Activated T-helper 1 cell treated with anti-CD3 and anti-CD28 coated beads, Interleukin-12 subunit alpha, Interleukin-12 subunit beta, Interleukin-2, Interleukin-4 antibody, amounts not matched to agents 30 ng/mL and 10 ng/mL and 1 ng/mL, durations not matched to agents 14 hours and 24 hours and 36 hours (primary cell): ENCODE measurements at regions of chr2 and their contacts with region 1.

Region 1: DNA sequence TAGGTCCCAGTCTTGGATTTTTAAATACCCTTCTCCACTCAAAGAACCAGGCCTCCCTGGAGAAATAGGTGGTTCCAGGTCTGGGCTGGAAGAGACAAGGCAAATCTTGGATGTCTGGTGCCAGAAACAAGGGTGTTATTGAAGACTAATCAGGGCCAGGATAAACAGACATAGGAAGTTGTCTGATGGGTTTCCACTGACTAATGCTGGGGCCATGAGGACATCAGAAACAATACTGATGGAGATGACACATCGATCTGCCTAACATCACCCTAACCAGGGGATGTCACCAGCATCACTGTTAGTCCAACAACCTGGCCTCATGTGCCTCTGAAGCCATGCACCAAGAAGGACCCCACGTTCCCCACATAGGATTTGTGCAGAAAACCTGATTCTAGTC is 42.5 kb upstream of the GLI2 start:
- DNase-seq: no peak
- H3K4me3 Mint-ChIP-seq: no peak overlapping the region
- H3K27ac Mint-ChIP-seq: no peak overlapping the region
- H3K4me1 Mint-ChIP-seq: no peaks in the 10 kb centered on the region
- H3K27me3 Mint-ChIP-seq: peaks cover 22% of the 10 kb centered on the region

Region 2: GRCh38 chr2:121080013-121080772 is 387.1 kb after region 1 on chr2:
- intact Hi-C with region 1: loop called (anchors 1 kb)
- DNase-seq: peak; percentile 11
- H3K4me3 Mint-ChIP-seq: no peak overlapping the region
- H3K27ac Mint-ChIP-seq: no peak overlapping the region
- H3K4me1 Mint-ChIP-seq: no peaks in the 10 kb centered on the region
- H3K27me3 Mint-ChIP-seq: peaks cover 18% of the 10 kb centered on the region